PC-3 (cell line): ENCODE measurements at regions of chr10 and their contacts with region 1.

Region 1: GRCh38 chr10:92999191-92999590 is 61.4 kb upstream of the CYP26C1 start:
- DNase-seq: no peak
- ATAC-seq: no peak
- H3K4me3 ChIP-seq: no peak overlapping the region
- H3K27ac ChIP-seq: no peak overlapping the region
- H3K4me1 ChIP-seq: no peaks in the 10 kb centered on the region
- H3K27me3 ChIP-seq: no peaks in the 10 kb centered on the region
- CTCF ChIP-seq: no peak

Region 2: DNA sequence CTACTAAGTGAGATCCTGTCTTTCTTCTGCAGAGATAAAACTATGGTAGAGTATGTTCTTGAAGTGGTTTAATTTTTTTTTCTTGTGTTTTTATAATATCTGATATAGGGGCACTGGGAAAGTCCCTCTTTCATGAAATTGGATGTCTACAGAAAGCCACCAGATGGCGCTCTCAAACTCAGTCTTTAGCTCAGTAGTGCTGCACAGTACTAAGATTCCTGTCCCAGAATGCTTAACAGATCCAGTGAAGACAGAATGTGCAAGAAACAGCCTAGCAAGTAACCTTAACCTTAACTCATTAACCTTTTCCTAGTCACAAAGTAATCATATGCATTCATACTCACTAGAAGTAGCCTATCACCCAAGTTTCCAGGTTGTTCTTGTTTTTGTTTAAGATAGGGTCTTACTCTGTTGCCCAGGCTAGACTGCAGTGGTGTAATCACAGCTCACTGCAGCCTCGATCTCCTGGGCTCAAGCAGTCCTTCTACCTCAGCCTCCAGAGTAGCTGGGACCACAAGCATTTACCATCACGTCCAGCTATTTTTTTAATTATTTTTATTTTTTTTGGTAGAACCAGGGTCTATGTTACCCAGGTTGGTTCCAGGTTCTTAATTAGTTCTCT is 482.0 kb before region 1 on chr10:
- CTCF ChIA-PET with region 1: no interaction called
- POLR2A ChIA-PET with region 1: no interaction called
- intact Hi-C with region 1: no loop called
- DNase-seq: peak; percentile 72
- ATAC-seq: peak; percentile 92
- H3K4me3 ChIP-seq: no peak overlapping the region
- H3K27ac ChIP-seq: no peak overlapping the region
- H3K4me1 ChIP-seq: no peaks in the 10 kb centered on the region
- H3K27me3 ChIP-seq: no peaks in the 10 kb centered on the region
- CTCF ChIP-seq: peak; percentile 83

Region 3: GRCh38 chr10:92801978-92802872 is 197.0 kb before region 1 on chr10:
- CTCF ChIA-PET with region 1: no interaction called
- POLR2A ChIA-PET with region 1: no interaction called
- intact Hi-C with region 1: no loop called
- DNase-seq: no peak
- ATAC-seq: no peak
- H3K4me3 ChIP-seq: no peak overlapping the region
- H3K27ac ChIP-seq: no peak overlapping the region
- H3K4me1 ChIP-seq: peaks cover 7% of the 10 kb centered on the region; the same call in 1 of the 2 replicates
- H3K27me3 ChIP-seq: no peaks in the 10 kb centered on the region
- CTCF ChIP-seq: no peak

Region 4: DNA sequence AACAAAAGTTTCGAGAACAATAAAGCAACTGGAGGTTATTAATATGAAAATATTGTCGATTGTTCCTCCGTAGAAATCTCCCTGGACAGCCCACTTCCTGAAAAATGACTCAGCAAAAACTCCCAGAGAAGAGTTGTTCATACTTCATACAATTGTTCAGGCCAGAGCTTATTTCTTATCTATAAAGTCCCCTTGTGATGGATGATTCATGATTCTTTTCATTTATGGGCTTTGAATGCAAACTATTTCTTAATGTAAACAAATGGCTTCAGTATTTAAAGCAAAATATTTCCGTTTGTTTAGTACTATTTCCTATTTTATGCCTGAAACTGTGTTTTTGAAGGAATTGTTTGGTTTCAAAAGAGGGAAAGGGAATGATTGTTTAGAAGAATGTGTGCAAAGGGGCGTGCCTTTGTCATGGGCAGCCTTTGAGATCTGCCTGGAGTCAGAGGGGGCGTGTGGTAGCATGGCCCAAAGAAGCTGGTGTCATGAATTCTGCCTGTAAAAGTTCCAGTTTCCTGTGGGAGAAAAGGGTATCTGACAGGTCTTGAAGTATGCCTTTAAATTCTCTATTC is 177.0 kb before region 1 on chr10:
- CTCF ChIA-PET with region 1: no interaction called
- POLR2A ChIA-PET with region 1: no interaction called
- intact Hi-C with region 1: no loop called
- DNase-seq: peak; percentile 85
- ATAC-seq: peak; percentile 88
- H3K4me3 ChIP-seq: peak overlapping the region; percentile 41
- H3K27ac ChIP-seq: peak overlapping the region; percentile 92
- H3K4me1 ChIP-seq: peaks cover 17% of the 10 kb centered on the region
- H3K27me3 ChIP-seq: no peaks in the 10 kb centered on the region
- CTCF ChIP-seq: no peak

Region 5: GRCh38 chr10:92957223-92958010 is 41.8 kb before region 1 on chr10:
- CTCF ChIA-PET with region 1: interaction called, 11 read pairs
- POLR2A ChIA-PET with region 1: no interaction called
- intact Hi-C with region 1: no loop called
- DNase-seq: no peak
- ATAC-seq: no peak
- H3K4me3 ChIP-seq: no peak overlapping the region
- H3K27ac ChIP-seq: no peak overlapping the region
- H3K4me1 ChIP-seq: no peaks in the 10 kb centered on the region
- H3K27me3 ChIP-seq: no peaks in the 10 kb centered on the region
- CTCF ChIP-seq: no peak